Ascending aorta (tissue), 2 donors: ENCODE measurements at regions of chr2 and their contacts with region 1.

Region 1: DNA sequence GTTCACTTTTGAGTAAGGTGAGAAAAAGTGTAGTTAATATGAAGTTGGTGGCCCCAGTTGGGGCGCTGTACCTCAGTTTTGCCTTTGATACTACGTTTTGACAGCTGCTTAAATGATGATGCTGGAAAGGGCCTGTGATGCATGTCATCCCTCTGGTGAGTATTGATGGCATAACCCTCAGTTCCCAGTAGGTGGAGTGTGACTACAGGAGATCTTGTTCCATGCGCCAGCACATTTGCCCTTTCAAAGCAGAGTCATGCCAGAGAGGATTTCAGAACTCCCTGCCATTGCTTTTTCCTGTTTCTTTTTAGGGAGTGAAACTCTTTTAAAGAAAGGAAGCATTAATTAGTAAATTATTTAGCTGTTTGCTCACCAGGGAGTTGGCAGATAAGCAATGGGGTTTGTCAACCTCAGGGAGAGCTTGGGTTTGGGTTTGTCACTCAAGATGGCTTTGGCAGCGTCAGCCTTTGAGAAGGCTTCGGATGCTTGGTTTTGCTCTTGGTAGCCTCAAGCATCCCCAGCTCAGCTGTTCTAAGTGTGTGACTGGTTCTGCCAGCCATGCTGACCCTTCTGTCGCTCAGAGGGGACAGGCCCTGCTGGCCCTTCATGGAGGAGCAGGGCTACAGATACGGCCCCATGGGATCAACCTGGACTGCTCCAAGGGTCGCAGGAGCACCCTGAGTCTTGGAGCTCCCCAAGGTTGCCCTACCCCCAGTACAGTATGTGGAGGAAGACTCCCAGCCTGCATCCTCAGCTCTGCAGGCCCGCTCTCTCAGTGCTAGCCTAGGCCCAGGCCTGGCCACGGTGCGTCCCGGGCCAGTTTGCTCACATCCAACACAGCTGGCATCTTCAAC is 29.1 kb downstream of the ARMC9 start:
- DNase-seq: peak in 1 of 2 donors; percentile 79
- H3K4me3 ChIP-seq: no peak overlapping the region
- H3K27ac ChIP-seq: peak overlapping the region; percentile 8 to 15
- H3K4me1 ChIP-seq: peaks cover 0 to 12% of the 10 kb centered on the region in 2 donors
- H3K27me3 ChIP-seq: no peaks in the 10 kb centered on the region
- CTCF ChIP-seq: peak; percentile 69 to 82 (median 75)

Region 2: GRCh38 chr2:230999477-230999876 is 228.1 kb before region 1 on chr2:
- intact Hi-C with region 1: no loop called
- DNase-seq: no peak
- H3K4me3 ChIP-seq: no peak overlapping the region
- H3K27ac ChIP-seq: no peak overlapping the region
- H3K4me1 ChIP-seq: no peaks in the 10 kb centered on the region
- H3K27me3 ChIP-seq: no peaks in the 10 kb centered on the region
- CTCF ChIP-seq: no peak

Region 3: DNA sequence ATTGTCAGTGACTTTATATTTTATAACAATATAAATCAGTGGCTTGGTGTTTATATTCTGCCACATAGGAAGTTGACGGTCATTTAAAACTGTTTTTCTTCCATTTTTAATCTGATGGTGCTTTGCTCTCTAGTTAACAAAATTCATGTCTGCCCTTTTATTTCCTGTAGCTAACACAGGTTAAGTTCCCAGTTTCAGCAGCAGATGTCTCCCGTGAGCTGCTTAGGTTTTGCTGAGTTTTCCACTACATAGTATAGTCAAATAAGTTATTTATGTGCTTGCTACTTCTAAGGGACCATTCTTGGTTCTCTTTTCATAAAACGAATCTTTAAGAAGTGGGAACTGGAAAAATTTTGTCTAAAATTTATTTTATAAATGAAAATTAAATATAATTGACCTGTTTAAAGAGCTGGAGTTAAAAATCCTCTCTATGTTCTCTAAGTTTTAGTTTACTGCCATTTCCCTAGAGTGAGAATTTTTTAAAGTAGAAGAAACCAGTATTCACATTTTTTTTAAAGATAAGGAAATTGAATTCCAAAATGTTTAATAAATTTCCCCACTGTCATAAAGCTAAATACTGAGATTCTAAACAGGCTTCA is 123.3 kb before region 1 on chr2:
- intact Hi-C with region 1: loop called (anchors 5 kb)
- DNase-seq: peak in 1 of 2 donors; percentile 81
- H3K4me3 ChIP-seq: no peak overlapping the region
- H3K27ac ChIP-seq: peak overlapping the region; percentile 31 to 50
- H3K4me1 ChIP-seq: no peaks in the 10 kb centered on the region
- H3K27me3 ChIP-seq: no peaks in the 10 kb centered on the region
- CTCF ChIP-seq: peak; percentile 81 to 88 (median 83)

Region 4: DNA sequence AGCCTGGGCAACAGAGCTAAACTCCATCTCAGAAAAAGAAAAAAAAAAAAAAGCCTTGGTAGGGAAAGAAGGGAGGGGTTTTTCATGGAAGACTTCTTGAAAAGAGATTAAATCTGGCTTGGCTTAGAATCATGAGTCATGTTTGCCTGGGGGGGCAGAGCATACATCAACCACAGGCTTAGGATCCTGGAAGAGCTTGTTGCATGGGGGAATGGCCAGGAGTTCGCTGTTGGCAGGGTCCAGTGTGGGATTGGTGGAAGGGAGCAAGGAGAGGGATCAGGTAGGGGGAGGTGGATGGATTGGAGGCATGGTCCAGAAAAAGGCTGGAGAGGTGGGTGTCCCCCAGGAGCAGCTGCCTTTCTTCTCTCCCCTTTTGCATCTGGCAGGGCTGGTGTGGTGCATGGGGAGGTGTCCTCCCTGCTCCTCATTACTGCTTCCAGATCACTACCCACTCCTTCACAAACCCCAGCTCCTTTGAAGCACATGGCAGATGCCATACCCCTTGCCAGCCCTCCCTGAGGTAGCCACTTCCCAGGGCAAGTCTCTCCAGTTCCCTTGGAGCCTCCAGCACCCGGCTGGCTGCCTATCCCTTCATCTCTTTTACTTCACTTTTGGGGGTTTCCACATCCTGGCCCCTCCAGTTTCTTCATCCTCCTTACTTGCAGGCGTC is 26.6 kb before region 1 on chr2:
- intact Hi-C with region 1: no loop called
- DNase-seq: peak in 1 of 2 donors; percentile 56
- H3K4me3 ChIP-seq: peak overlapping the region in 1 of 2 donors; percentile 71
- H3K27ac ChIP-seq: no peak overlapping the region
- H3K4me1 ChIP-seq: peaks cover 3 to 14% of the 10 kb centered on the region in 2 donors
- H3K27me3 ChIP-seq: no peaks in the 10 kb centered on the region
- CTCF ChIP-seq: no peak

Region 5: DNA sequence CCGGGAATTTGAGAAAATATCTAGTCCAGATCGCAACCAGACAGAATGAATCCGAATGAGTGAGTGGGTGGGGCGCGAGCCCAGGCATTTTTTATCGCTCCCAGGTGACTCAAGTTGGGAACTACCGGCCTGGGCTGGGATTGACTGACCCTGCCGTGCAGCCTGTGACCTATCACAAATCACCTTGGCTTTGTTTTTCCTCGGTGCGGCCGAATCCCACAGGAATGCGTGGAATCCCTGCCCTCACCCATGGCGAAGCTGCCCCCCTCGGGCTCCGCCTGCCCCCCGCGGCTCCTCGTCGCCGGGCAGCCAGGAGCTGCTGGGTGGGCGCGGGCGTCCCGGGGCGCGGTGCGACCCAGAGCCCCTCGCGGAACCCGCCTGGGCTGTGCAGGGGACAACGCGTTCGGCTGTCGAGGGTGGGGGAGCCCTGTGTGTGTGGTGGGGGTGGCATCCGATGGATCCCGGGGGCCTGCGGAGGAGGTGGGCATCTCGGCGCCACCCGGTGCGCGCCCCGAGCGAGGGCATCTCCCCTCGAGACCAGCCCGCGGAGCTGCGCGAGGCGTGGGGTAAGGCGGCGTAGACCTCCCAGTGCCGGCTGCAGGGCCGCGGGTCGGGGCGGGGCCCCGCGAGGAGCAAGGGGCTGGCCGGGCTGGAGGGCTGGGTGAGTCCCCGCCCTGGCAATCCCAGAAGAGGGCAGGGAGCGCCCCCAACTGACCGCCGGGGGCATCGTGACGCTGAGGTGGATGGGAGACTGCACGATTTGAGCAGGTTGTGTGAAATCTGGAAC is 184.5 kb after region 1 on chr2:
- intact Hi-C with region 1: loop called (anchors 5 kb)
- DNase-seq: peak; percentile 53 to 93
- H3K4me3 ChIP-seq: peak overlapping the region; percentile 73 to 92
- H3K27ac ChIP-seq: peak overlapping the region; percentile 8 to 26
- H3K4me1 ChIP-seq: peaks cover 0 to 5% of the 10 kb centered on the region in 2 donors
- H3K27me3 ChIP-seq: no peaks in the 10 kb centered on the region
- CTCF ChIP-seq: peak; percentile 82 to 97 (median 96)

Region 6: GRCh38 chr2:231452799-231453508 is 225.4 kb after region 1 on chr2:
- intact Hi-C with region 1: loop called (anchors 5 kb)
- DNase-seq: no peak
- H3K4me3 ChIP-seq: no peak overlapping the region
- H3K27ac ChIP-seq: peak overlapping the region in 1 of 2 donors; percentile 15
- H3K4me1 ChIP-seq: no peaks in the 10 kb centered on the region
- H3K27me3 ChIP-seq: no peaks in the 10 kb centered on the region
- CTCF ChIP-seq: no peak